Activated CD8-positive, alpha-beta T cell treated with anti-CD3 and anti-CD28 coated beads for 36 hours (primary cell): ENCODE measurements at regions of chr11 and their contacts with region 1.

Region 1: GRCh38 chr11:86818466-86819192 is 18.3 kb downstream of the PRSS23 start:
- DNase-seq: no peak
- ATAC-seq: peak; percentile 51
- H3K4me3 Mint-ChIP-seq: no peak overlapping the region
- H3K27ac Mint-ChIP-seq: no peak overlapping the region
- H3K4me1 Mint-ChIP-seq: no peaks in the 10 kb centered on the region
- H3K27me3 Mint-ChIP-seq: peaks cover 24% of the 10 kb centered on the region
- CTCF ChIP-seq: peak; percentile 91

Region 2: GRCh38 chr11:86671682-86672621 is 146.7 kb before region 1 on chr11 and contains the start of gene ME3:
- CTCF ChIA-PET with region 1: no interaction called
- POLR2A ChIA-PET with region 1: no interaction called
- intact Hi-C with region 1: loop called (anchors 5 kb)
- DNase-seq: peak; percentile 63
- ATAC-seq: peak; percentile 86
- H3K4me3 Mint-ChIP-seq: peak within 1 kb of the TSS; percentile 71
- H3K27ac Mint-ChIP-seq: peak within 1 kb of the TSS; percentile 47
- H3K4me1 Mint-ChIP-seq: peaks cover 6% of the 10 kb centered on the region
- H3K27me3 Mint-ChIP-seq: peaks cover 35% of the 10 kb centered on the region
- CTCF ChIP-seq: no peak
- total RNA-seq, gene ME3: 5.0 to 6.2 TPM

Region 3: DNA sequence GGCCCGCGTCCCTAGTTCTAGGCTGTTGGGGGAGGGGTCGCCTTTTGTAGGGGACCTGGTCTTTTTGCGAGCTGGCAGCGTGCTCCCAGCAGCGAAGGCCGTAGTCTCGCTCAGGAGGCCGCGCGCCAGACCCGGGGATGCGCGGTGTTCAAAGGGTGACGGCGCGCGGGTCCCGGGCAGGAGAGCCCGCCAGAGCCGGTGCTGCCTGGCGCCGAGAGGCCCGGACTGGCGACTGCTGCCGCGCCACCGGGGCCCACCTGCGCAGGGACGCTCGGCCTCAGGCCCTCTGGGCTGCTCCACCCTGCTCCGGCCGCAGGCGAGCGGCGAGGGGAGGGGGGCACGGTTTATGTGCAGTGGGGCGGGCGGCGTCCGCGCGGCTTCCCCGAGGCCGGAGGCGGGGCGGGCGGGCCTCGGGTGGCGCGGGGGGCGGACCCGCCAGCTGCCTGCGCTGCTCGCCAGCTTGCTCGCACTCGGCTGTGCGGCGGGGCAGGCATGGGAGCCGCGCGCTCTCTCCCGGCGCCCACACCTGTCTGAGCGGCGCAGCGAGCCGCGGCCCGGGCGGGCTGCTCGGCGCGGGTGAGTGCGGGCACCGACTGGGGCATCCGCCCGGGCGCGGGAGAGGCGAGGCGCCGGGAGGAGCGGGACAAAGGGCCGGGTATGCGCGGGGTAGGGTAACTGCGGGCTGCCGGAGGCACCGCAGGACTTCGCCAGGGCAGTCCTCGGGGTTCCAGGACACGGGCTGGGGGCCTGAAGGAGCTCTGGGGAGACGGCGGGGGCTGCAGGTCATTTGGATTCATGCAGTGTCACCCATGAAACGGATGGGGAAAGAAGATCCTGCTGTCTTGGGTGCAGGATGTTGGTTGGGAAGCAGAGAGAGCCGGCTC is 18.3 kb before region 1 on chr11 and contains the start of gene PRSS23:
- CTCF ChIA-PET with region 1: no interaction called
- POLR2A ChIA-PET with region 1: no interaction called
- intact Hi-C with region 1: no loop called
- DNase-seq: peak; percentile 32
- ATAC-seq: peak; percentile 72
- H3K4me3 Mint-ChIP-seq: peak within 1 kb of the TSS; percentile 65
- H3K27ac Mint-ChIP-seq: no peak within 1 kb of the TSS
- H3K4me1 Mint-ChIP-seq: peaks cover 25% of the 10 kb centered on the region
- H3K27me3 Mint-ChIP-seq: peaks cover 49% of the 10 kb centered on the region
- CTCF ChIP-seq: no peak
- total RNA-seq, gene PRSS23: 1.4 to 2.3 TPM

Region 4: GRCh38 chr11:87320123-87320522 is 501.5 kb after region 1 on chr11:
- CTCF ChIA-PET with region 1: no interaction called
- POLR2A ChIA-PET with region 1: no interaction called
- intact Hi-C with region 1: no loop called
- DNase-seq: no peak
- ATAC-seq: no peak
- H3K4me3 Mint-ChIP-seq: no peak overlapping the region
- H3K27ac Mint-ChIP-seq: no peak overlapping the region
- H3K4me1 Mint-ChIP-seq: no peaks in the 10 kb centered on the region
- H3K27me3 Mint-ChIP-seq: no peaks in the 10 kb centered on the region
- CTCF ChIP-seq: no peak